CD4-positive, alpha-beta memory T cell (primary cell): ENCODE measurements at regions of chr1 and their contacts with region 1.

Region 1: DNA sequence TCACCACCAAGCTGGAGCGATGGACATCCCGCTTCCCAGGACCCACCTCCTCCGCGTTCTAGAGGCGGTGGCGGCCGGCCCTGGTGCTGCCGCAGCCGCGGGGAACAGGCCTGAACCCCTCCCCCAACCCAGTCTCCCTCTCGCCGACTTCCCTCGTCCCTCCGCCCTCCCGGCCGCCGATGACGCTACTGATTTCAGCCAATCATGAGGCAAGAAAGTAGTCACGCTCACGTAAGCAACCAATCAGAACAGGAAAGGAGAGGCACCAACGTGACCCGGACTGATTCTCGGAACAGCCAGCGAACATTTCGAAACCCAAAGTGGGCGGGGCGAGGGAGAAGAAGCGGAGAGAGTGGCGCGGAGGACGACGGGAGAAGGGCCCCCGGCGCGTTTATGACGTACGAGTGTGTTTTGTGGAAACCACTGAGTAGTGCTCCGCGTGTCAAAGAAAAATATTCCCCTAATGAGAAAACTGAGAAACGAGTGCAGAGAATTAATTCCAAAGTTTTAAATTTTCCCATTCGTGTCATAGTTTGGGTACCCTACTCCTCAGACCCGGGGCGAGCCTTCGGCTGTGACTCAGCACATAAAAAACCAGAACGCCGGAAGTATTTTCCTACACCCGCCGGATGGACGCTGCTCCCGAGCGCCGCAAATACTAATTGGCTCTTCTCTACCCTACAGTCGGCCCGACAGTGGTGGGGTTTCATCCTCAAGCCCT is at the start of gene NRDC:
- DNase-seq: peak; percentile 99 to 100 (median 100)
- H3K4me3 ChIP-seq: peak within 1 kb of the TSS; percentile 92 to 96
- H3K4me3 Mint-ChIP-seq: no peak within 1 kb of the TSS
- H3K27ac ChIP-seq: peak within 1 kb of the TSS; percentile 94
- H3K27ac Mint-ChIP-seq: no peak within 1 kb of the TSS
- H3K4me1 ChIP-seq: peaks cover 42% of the 10 kb centered on the region
- H3K4me1 Mint-ChIP-seq: peaks cover 0 to 25% (median 10%) of the 10 kb centered on the region in 4 donors
- H3K27me3 ChIP-seq: no peaks in the 10 kb centered on the region
- H3K27me3 Mint-ChIP-seq: peaks cover 11 to 12% of the 10 kb centered on the region in 2 donors
- total RNA-seq, gene NRDC: 133 to 137 TPM

Region 2: GRCh38 chr1:51616901-51617708 is 261.7 kb before region 1 on chr1 and contains the start of gene OSBPL9:
- CTCF ChIA-PET with region 1: no interaction called
- POLR2A ChIA-PET with region 1: no interaction called
- intact Hi-C with region 1: loop called (anchors 2 kb)
- DNase-seq: peak; percentile 84 to 91 (median 87)
- H3K4me3 ChIP-seq: peak within 1 kb of the TSS; percentile 76 to 79
- H3K4me3 Mint-ChIP-seq: peak within 1 kb of the TSS; percentile 100
- H3K27ac ChIP-seq: peak within 1 kb of the TSS; percentile 72
- H3K27ac Mint-ChIP-seq: peak within 1 kb of the TSS; percentile 93 to 100 (median 99)
- H3K4me1 ChIP-seq: peaks cover 32% of the 10 kb centered on the region
- H3K4me1 Mint-ChIP-seq: peaks cover 24 to 49% (median 37%) of the 10 kb centered on the region in 4 donors
- H3K27me3 ChIP-seq: no peaks in the 10 kb centered on the region
- H3K27me3 Mint-ChIP-seq: peaks cover under 1 to 1% of the 10 kb centered on the region in 2 donors
- total RNA-seq, gene OSBPL9: 45.1 to 46.9 TPM

Region 3: GRCh38 chr1:51897699-51898031 is 18.9 kb after region 1 on chr1:
- CTCF ChIA-PET with region 1: interaction called, 10 read pairs
- POLR2A ChIA-PET with region 1: interaction called, 10 read pairs
- intact Hi-C with region 1: no loop called
- DNase-seq: no peak
- H3K4me3 ChIP-seq: no peak overlapping the region
- H3K4me3 Mint-ChIP-seq: no peak overlapping the region
- H3K27ac ChIP-seq: no peak overlapping the region
- H3K27ac Mint-ChIP-seq: no peak overlapping the region
- H3K4me1 ChIP-seq: no peaks in the 10 kb centered on the region
- H3K4me1 Mint-ChIP-seq: no peaks in the 10 kb centered on the region
- H3K27me3 ChIP-seq: no peaks in the 10 kb centered on the region
- H3K27me3 Mint-ChIP-seq: peaks cover 29 to 47% of the 10 kb centered on the region in 2 donors

Region 4: DNA sequence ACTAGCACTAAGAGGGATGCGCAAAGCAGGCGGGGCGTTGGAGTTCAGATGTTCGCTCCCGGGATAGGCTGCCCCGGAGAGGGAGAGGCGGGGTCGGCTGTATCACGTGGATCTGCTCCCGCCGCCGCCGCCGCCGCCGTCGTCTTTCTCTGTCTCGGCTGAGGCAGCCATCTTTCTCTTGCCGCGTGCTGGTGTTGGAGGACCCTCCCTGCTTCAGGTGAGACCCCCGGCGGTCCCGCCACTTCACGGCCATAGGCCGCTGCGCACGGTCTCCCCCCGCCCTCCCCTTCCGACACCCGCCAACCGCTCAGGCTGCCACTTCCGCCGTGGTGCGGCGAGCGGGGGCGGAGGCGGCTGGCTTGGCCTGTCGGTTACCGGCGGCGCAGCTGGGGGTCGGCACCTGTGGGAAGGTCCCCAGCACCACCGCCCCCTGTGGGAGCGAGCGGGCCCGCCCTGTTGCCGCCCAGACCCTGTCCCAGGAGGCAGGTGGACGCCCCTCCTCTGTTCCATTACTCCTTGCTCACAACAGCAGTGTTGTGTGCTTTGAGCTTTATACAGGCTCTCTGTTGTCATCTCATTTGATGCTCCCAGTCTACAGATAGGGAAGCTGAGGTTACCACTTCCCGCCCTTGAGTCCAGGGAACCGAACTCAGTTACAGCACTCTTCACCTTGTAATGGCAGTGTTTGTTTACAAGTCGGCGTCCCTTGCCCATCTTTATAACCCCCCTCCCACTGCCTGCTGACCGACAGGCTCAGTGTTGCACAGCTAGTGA is 177.6 kb after region 1 on chr1 and contains the start of gene BTF3L4:
- CTCF ChIA-PET with region 1: no interaction called
- POLR2A ChIA-PET with region 1: no interaction called
- intact Hi-C with region 1: loop called (anchors 1 kb)
- DNase-seq: peak; percentile 89 to 97 (median 91)
- H3K4me3 ChIP-seq: peak within 1 kb of the TSS; percentile 81 to 92
- H3K4me3 Mint-ChIP-seq: peak within 1 kb of the TSS; percentile 98 to 100 (median 98)
- H3K27ac ChIP-seq: peak within 1 kb of the TSS; percentile 88
- H3K27ac Mint-ChIP-seq: peak within 1 kb of the TSS; percentile 84 to 98 (median 97)
- H3K4me1 ChIP-seq: peaks cover 56% of the 10 kb centered on the region
- H3K4me1 Mint-ChIP-seq: peaks cover 36 to 72% (median 57%) of the 10 kb centered on the region in 4 donors
- H3K27me3 ChIP-seq: no peaks in the 10 kb centered on the region
- H3K27me3 Mint-ChIP-seq: no peaks in the 10 kb centered on the region
- total RNA-seq, gene BTF3L4: 30.4 to 34.6 TPM

Region 5: GRCh38 chr1:52726265-52727113 is 847.7 kb after region 1 on chr1 and contains the start of gene ZYG11B:
- CTCF ChIA-PET with region 1: no interaction called
- POLR2A ChIA-PET with region 1: no interaction called
- intact Hi-C with region 1: loop called (anchors 1 kb)
- DNase-seq: peak; percentile 87 to 90 (median 89)
- H3K4me3 ChIP-seq: peak within 1 kb of the TSS; percentile 67 to 74
- H3K4me3 Mint-ChIP-seq: peak within 1 kb of the TSS; percentile 85 to 98 (median 96)
- H3K27ac ChIP-seq: peak within 1 kb of the TSS; percentile 74
- H3K27ac Mint-ChIP-seq: peak within 1 kb of the TSS; percentile 49 to 97 (median 94)
- H3K4me1 ChIP-seq: peaks cover 33% of the 10 kb centered on the region
- H3K4me1 Mint-ChIP-seq: peaks cover 35 to 41% (median 36%) of the 10 kb centered on the region in 4 donors
- H3K27me3 ChIP-seq: no peaks in the 10 kb centered on the region
- H3K27me3 Mint-ChIP-seq: peaks cover 0 to 2% of the 10 kb centered on the region in 2 donors
- total RNA-seq, gene ZYG11B: 21.7 to 23.1 TPM